ENCODE measurements at regions of chr4 and their contacts with region 1.

Region 1: DNA sequence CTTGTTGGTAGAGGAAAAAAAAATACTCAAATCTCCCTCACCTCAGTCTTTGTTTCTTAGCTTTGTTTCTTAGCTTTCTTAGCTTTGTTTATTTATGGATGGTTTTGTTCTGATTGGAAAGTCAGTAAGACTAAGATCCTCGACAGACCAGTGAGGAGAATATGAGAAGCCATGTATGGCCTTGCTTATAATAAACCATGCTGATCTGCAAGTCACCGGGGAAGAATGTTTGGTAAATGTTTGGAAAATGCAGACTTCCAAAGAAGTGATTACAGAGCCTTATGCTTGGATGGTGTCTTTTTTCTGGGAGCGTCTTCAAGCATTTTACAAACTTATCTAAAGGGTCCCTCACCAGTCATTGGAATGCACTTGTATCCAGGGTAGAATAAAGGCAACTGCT is 90.1 kb upstream of the NOCT start:
- DNase-seq: no peak
- ATAC-seq: no peak
- H3K4me3 Mint-ChIP-seq: no peak overlapping the region
- H3K27ac Mint-ChIP-seq: no peak overlapping the region
- H3K4me1 Mint-ChIP-seq: peaks cover 9% of the 10 kb centered on the region
- H3K27me3 Mint-ChIP-seq: no peaks in the 10 kb centered on the region; the same call in 1 of the 2 replicates
- CTCF ChIP-seq: no peak

Region 2: GRCh38 chr4:138938366-138938690 is 12.8 kb after region 1 on chr4:
- CTCF ChIA-PET with region 1: interaction called, 12 read pairs
- POLR2A ChIA-PET with region 1: interaction called, 5 read pairs
- DNase-seq: no peak
- ATAC-seq: peak; percentile 67
- H3K4me3 Mint-ChIP-seq: no peak overlapping the region
- H3K27ac Mint-ChIP-seq: no peak overlapping the region
- H3K4me1 Mint-ChIP-seq: peaks cover 55% of the 10 kb centered on the region
- H3K27me3 Mint-ChIP-seq: no peaks in the 10 kb centered on the region
- CTCF ChIP-seq: no peak